ENCODE measurements at regions of chr6 and their contacts with region 1.

Region 1: GRCh38 chr6:111764238-111765175 is 108.7 kb downstream of the FYN start:
- DNase-seq: peak; percentile 84
- H3K4me3 Mint-ChIP-seq: peak overlapping the region; percentile 58
- H3K27ac Mint-ChIP-seq: peak overlapping the region; percentile 97
- H3K4me1 Mint-ChIP-seq: peaks cover 98% of the 10 kb centered on the region
- H3K27me3 Mint-ChIP-seq: no peaks in the 10 kb centered on the region

Region 2: GRCh38 chr6:111750753-111751684 is 13.5 kb before region 1 on chr6:
- CTCF ChIA-PET with region 1: interaction called, 5 read pairs
- intact Hi-C with region 1: loop called (anchors 1 kb)
- DNase-seq: peak; percentile 76
- H3K4me3 Mint-ChIP-seq: peak overlapping the region; percentile 32
- H3K27ac Mint-ChIP-seq: peak overlapping the region; percentile 95
- H3K4me1 Mint-ChIP-seq: peaks cover 92% of the 10 kb centered on the region
- H3K27me3 Mint-ChIP-seq: no peaks in the 10 kb centered on the region

Region 3: DNA sequence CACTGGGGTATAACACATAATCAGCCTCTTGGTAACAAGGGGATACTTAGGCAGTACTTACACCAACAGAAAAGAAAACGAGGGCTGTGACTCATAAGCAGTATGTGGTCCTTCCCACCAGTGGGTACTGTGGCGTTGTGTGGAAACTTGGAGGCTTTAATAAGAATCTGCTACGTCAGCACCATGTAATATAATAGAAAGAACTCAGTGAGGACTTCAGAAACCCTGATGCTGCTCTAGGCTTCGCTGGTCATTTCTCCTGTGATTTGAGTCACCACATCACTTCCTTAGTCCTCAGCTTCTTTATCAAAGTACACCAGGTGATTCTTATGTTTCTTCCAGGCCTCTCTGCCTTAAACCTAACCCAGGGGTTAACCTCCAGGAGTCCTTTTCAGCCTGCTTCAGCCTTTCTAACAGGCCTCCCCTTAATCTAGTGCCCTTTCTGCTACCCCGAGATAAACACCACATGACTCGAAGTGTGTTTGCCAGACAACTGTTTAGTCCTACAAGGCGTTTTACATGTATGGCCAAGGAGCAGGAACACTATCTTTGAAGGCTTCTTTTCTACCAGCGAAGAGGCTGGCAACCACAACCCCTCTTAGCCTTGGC is 40.2 kb after region 1 on chr6:
- CTCF ChIA-PET with region 1: interaction called, 23 read pairs
- intact Hi-C with region 1: loop called (anchors 1 kb)
- DNase-seq: peak; percentile 74
- H3K4me3 Mint-ChIP-seq: peak overlapping the region; percentile 5
- H3K27ac Mint-ChIP-seq: peak overlapping the region; percentile 92
- H3K4me1 Mint-ChIP-seq: peaks cover 92% of the 10 kb centered on the region
- H3K27me3 Mint-ChIP-seq: no peaks in the 10 kb centered on the region

Region 4: GRCh38 chr6:111841822-111842221 is 77.3 kb after region 1 on chr6:
- CTCF ChIA-PET with region 1: interaction called, 11 read pairs
- intact Hi-C with region 1: loop called (anchors 1 kb)
- DNase-seq: peak; percentile 70
- H3K4me3 Mint-ChIP-seq: no peak overlapping the region
- H3K27ac Mint-ChIP-seq: no peak overlapping the region
- H3K4me1 Mint-ChIP-seq: peaks cover 36% of the 10 kb centered on the region
- H3K27me3 Mint-ChIP-seq: no peaks in the 10 kb centered on the region

Region 5: DNA sequence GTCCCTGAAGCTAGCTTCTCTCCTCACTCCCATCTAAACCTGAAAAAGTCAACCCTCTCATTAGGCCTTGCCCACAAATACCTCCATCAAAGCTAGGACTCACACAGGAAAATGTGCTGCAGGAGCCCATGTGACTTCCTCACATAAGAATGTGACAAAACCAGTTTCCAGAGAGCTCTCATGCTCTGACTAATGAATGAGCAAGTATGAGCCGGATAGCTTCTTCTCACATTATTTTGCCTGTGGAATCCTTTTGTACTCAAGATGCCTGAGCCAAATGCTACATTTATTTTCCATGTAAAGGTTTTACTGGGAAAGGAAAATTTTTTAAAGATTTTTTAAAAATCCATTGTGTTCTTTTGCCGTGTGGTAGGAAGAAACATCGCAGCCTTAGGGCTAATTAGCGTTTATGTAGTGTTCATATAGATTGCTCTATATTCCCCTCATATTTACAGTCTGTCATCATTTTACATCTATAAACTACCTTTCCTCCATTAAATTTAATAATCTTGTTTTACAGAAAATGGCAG is 220.8 kb after region 1 on chr6:
- CTCF ChIA-PET with region 1: interaction called, 3 read pairs
- intact Hi-C with region 1: loop called (anchors 1 kb)
- DNase-seq: peak; percentile 76
- H3K4me3 Mint-ChIP-seq: peak overlapping the region; percentile 9
- H3K27ac Mint-ChIP-seq: peak overlapping the region; percentile 94
- H3K4me1 Mint-ChIP-seq: peaks cover 87% of the 10 kb centered on the region
- H3K27me3 Mint-ChIP-seq: no peaks in the 10 kb centered on the region